ENCODE measurements at regions of chr1 and their contacts with region 1.

Region 1: GRCh38 chr1:155091071-155091709 is 12.6 kb downstream of the EFNA3 start:
- DNase-seq: peak; percentile 85 to 91
- H3K4me3 ChIP-seq: no peak overlapping the region
- H3K4me3 Mint-ChIP-seq: peak overlapping the region; percentile 47
- H3K27ac Mint-ChIP-seq: no peak overlapping the region
- H3K4me1 ChIP-seq: peaks cover 10% of the 10 kb centered on the region
- H3K4me1 Mint-ChIP-seq: peaks cover 6% of the 10 kb centered on the region
- H3K27me3 ChIP-seq: no peaks in the 10 kb centered on the region
- H3K27me3 Mint-ChIP-seq: no peaks in the 10 kb centered on the region
- CTCF ChIP-seq: peak; percentile 95 to 96

Region 2: DNA sequence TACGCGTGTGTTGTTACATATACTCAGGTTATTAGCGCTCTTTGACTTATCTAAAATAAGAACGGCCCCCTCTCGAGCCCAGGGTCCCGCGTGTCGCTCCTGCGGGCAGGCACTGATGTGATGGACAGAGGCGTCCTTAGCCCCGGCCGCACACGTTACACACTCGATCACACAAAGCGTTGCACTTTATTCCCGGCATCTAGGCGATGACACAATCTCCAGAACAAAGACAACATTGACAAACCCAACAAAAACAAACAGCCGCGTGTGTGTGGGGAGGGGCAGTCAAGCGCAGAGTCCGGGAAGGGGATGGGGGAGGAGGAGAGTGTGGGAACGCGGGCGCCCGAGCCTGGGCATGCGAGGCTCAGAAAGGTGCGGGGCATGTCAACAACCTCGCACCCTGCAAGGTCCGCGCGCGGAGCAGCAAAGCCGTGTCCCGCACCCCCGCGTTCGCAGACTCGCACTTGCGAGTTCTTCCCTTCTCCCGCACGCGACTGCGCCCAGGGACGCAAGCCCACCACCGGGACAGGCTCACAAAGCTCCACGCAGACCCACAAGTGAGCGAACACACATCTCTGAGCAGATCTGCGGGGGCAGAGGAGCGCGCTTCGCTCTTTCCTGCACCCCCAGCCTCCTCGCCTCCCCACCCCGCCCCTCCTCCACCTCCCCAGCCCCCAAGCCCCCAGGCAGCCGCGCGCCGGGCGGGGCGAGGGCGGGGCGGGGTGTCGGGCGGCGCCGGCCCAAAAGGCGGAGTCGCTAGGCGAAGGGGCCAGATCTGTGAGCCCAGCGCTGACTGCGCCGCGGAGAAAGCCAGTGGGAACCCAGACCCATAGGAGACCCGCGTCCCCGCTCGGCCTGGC is 36.1 kb after region 1 on chr1 and contains the start of gene EFNA1:
- CTCF ChIA-PET with region 1: interaction called, 16 read pairs
- POLR2A ChIA-PET with region 1: no interaction called
- intact Hi-C with region 1: loop called (anchors 1 kb)
- DNase-seq: peak; percentile 82
- H3K4me3 ChIP-seq: peak within 1 kb of the TSS; percentile 68
- H3K4me3 Mint-ChIP-seq: peak within 1 kb of the TSS; percentile 89
- H3K27ac Mint-ChIP-seq: peak within 1 kb of the TSS; percentile 80
- H3K4me1 ChIP-seq: peaks cover 53% of the 10 kb centered on the region
- H3K4me1 Mint-ChIP-seq: peaks cover 42% of the 10 kb centered on the region
- H3K27me3 ChIP-seq: no peaks in the 10 kb centered on the region
- H3K27me3 Mint-ChIP-seq: no peaks in the 10 kb centered on the region
- CTCF ChIP-seq: no peak
- total RNA-seq, gene EFNA1: 42.5 and 47.9 TPM in 2 replicates

Region 3: GRCh38 chr1:155135415-155136028 is 44.3 kb after region 1 on chr1 and contains the start of gene SLC50A1:
- CTCF ChIA-PET with region 1: interaction called, 17 read pairs
- POLR2A ChIA-PET with region 1: interaction called, 4 read pairs
- intact Hi-C with region 1: loop called (anchors 1 kb)
- DNase-seq: peak; percentile 96 to 97
- H3K4me3 ChIP-seq: peak within 1 kb of the TSS; percentile 84
- H3K4me3 Mint-ChIP-seq: peak within 1 kb of the TSS; percentile 81
- H3K27ac Mint-ChIP-seq: peak within 1 kb of the TSS; percentile 86
- H3K4me1 ChIP-seq: peaks cover 12% of the 10 kb centered on the region
- H3K4me1 Mint-ChIP-seq: peaks cover 22% of the 10 kb centered on the region
- H3K27me3 ChIP-seq: no peaks in the 10 kb centered on the region
- H3K27me3 Mint-ChIP-seq: no peaks in the 10 kb centered on the region
- CTCF ChIP-seq: peak in 1 of 2 experiments; percentile 15
- total RNA-seq, gene SLC50A1: 38.4 and 43.6 TPM in 2 replicates

Measured in Caco-2 (cell line).